ENCODE measurements at regions of chr3 and their contacts with region 1.

Region 1: GRCh38 chr3:192816351-192816750 is 89.0 kb upstream of the FGF12 start:
- DNase-seq: peak; percentile 68
- H3K4me3 Mint-ChIP-seq: no peak overlapping the region
- H3K27ac Mint-ChIP-seq: peak overlapping the region; percentile 26
- H3K4me1 Mint-ChIP-seq: peaks cover 52% of the 10 kb centered on the region
- H3K27me3 Mint-ChIP-seq: peaks cover 2% of the 10 kb centered on the region

Region 2: GRCh38 chr3:192831111-192831644 is 14.8 kb after region 1 on chr3:
- intact Hi-C with region 1: loop called (anchors 1 kb)
- DNase-seq: peak; percentile 66
- H3K4me3 Mint-ChIP-seq: peak overlapping the region; percentile 26
- H3K27ac Mint-ChIP-seq: peak overlapping the region; percentile 83
- H3K4me1 Mint-ChIP-seq: peaks cover 39% of the 10 kb centered on the region
- H3K27me3 Mint-ChIP-seq: no peaks in the 10 kb centered on the region

Region 3: DNA sequence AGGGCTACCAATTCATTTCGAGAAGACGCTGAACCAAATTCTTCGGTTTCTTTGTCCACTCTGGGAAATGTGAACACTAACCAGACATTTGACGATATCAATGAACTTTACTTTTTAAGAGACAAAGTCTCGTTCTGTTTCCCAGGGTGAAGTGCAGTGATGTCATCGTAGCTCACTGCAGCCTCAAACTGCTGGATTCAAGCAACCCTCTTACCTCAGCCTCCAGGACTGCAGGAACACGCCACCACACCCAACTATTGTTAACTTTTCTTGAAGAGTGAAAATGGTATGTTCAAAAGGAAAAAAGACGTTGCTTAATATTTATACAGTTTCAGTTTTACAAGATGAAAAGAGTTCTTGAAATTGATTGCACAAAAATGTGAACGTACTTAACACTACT is 70.7 kb after region 1 on chr3:
- intact Hi-C with region 1: loop called (anchors 1 kb)
- DNase-seq: peak; percentile 64
- H3K4me3 Mint-ChIP-seq: peak overlapping the region; percentile 39
- H3K27ac Mint-ChIP-seq: peak overlapping the region; percentile 85
- H3K4me1 Mint-ChIP-seq: peaks cover 57% of the 10 kb centered on the region
- H3K27me3 Mint-ChIP-seq: peaks cover 3% of the 10 kb centered on the region

Region 4: DNA sequence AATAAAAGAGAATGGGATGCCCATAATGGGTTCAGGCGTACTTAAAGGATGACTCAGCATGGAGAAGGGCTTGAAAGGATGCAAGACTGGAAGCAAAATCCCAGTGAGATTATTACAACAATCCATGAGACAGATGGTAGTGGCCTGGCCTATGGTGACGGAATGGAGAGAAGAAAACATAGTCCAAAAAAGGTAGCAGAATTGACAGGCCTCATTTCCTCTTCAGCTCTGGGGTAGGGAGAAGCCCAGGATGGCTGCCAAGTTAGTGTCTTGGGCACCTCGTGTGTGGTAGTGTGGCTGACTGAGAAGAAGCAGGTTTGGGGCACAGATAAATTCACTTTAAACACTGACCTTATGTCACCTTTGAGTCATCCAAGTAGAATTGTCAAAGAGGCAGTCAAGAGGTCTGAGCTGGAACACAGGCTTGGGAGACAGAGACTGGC is 83.2 kb after region 1 on chr3:
- intact Hi-C with region 1: loop called (anchors 1 kb)
- DNase-seq: no peak
- H3K4me3 Mint-ChIP-seq: peak overlapping the region; percentile 65
- H3K27ac Mint-ChIP-seq: peak overlapping the region; percentile 85
- H3K4me1 Mint-ChIP-seq: peaks cover 62% of the 10 kb centered on the region
- H3K27me3 Mint-ChIP-seq: peaks cover 20% of the 10 kb centered on the region

Region 5: DNA sequence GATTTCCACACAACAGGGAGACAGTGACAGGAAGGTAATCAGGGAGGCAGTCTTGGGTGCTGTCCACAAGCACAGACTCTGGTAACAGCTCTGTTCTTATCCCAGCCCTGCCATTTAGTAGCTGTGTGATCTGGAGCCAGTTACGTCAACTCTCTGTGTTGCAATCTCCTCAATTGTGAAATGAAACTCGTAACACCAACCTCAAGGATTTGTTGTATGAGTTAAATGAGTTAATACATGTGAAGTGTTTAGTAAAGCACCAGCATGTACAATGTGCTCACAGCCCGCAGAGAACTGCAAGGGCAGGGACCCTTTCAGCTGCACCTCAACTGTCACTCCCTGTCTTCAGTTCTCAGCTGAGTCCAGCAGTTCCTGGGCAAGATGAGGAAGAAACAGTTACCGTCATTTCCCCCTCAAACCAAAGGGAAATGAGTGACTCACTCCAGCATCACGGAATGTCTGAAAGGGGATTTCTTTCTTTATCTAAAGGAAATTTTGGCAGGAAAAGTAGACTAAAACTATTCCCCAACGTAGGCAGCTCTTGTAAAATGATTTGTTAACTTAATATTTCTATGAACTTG is 141.2 kb after region 1 on chr3:
- intact Hi-C with region 1: loop called (anchors 2 kb)
- DNase-seq: peak; percentile 67
- H3K4me3 Mint-ChIP-seq: peak overlapping the region; percentile 24
- H3K27ac Mint-ChIP-seq: peak overlapping the region; percentile 78
- H3K4me1 Mint-ChIP-seq: peaks cover 24% of the 10 kb centered on the region
- H3K27me3 Mint-ChIP-seq: no peaks in the 10 kb centered on the region

Region 6: DNA sequence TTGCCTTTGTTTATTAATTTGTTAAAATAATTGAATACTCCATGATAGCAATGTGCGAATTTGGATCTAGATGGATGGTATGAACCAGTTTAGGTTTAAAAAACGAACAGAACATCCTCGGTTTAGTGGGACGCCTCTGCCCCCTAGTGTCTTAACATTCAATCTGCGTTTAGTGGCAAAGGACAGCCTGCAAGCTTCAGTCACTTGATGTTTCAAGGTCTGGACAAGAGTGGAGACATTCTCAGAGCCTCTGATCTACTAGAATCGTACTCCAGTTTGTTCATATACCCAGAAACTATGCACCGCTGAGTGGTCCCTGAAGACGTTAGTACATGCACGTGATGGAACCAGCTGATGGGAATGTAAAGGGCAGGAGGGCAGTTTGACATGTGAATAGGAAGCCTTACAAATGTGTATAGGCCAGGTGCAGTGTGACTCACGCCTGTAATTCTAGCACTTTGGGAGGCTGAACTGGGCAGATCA is 756.1 kb after region 1 on chr3:
- intact Hi-C with region 1: loop called (anchors 2 kb)
- DNase-seq: peak; percentile 84
- H3K4me3 Mint-ChIP-seq: no peak overlapping the region
- H3K27ac Mint-ChIP-seq: no peak overlapping the region
- H3K4me1 Mint-ChIP-seq: no peaks in the 10 kb centered on the region
- H3K27me3 Mint-ChIP-seq: peaks cover 5% of the 10 kb centered on the region